Activated B cell treated with CpG ODN at 0.5 μM for 24 hours (primary cell): ENCODE measurements at regions of chr11 and their contacts with region 1.

Region 1: DNA sequence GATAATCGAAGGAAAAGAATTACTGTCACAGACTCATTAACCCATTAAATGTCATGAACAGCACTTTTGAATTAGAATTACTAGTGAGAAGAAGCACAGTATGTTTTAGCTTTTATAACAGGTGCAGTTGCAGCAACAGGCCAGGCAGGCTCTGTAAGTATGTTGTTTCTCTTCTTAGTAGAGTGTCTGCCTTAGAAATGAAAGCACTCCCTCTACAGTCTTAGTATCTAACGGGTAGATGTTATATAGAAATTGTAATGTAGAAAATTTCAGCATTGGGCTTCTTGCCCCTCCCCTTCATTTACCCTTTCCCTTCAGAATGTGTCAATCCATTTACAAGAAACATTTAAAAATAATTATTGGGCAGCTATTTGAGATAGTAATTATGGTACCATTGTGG is 87.4 kb downstream of the HIPK3 start:
- DNase-seq: no peak
- ATAC-seq: no peak
- H3K4me3 Mint-ChIP-seq: no peak overlapping the region
- H3K27ac Mint-ChIP-seq: peak overlapping the region; percentile 18
- H3K4me1 Mint-ChIP-seq: peaks cover 24% of the 10 kb centered on the region
- H3K27me3 Mint-ChIP-seq: no peaks in the 10 kb centered on the region
- CTCF ChIP-seq: no peak

Region 2: DNA sequence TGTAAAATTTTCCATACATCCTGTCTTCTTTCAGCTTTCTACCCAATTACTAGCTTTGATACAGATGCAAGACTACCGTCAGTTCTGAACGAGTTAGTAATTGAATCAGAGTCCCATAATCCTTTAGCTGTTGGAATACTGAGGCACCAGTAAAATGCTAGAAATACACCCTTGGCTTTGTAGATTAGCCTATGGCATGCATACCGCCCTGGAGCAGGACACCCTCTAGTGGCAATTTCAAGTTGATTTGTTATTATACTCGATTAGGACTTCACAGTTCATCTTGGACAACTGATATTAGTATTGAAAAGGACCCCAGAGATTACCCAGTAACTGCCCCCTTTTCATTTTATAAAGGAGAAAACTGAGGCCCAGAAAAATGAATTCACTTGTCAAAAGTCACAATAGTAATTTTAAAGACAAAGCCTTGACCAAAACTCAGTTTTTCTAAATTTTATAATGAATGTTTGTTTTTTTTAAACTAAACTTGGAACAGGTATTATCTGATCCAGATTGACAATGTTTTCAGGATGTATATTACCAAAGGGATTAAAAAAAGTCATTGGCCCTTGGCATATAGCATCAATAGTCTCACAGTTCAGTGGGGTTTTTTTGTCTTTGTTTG is 14.8 kb before region 1 on chr11:
- CTCF ChIA-PET with region 1: no interaction called
- POLR2A ChIA-PET with region 1: no interaction called
- intact Hi-C with region 1: loop called (anchors 2 kb)
- DNase-seq: no peak
- ATAC-seq: peak; percentile 65
- H3K4me3 Mint-ChIP-seq: no peak overlapping the region
- H3K27ac Mint-ChIP-seq: no peak overlapping the region
- H3K4me1 Mint-ChIP-seq: peaks cover 14% of the 10 kb centered on the region
- H3K27me3 Mint-ChIP-seq: no peaks in the 10 kb centered on the region
- CTCF ChIP-seq: no peak

Region 3: GRCh38 chr11:33375236-33375635 is 30.6 kb after region 1 on chr11:
- CTCF ChIA-PET with region 1: no interaction called
- POLR2A ChIA-PET with region 1: no interaction called
- intact Hi-C with region 1: no loop called
- DNase-seq: no peak
- ATAC-seq: no peak
- H3K4me3 Mint-ChIP-seq: peak overlapping the region; percentile 50
- H3K27ac Mint-ChIP-seq: no peak overlapping the region
- H3K4me1 Mint-ChIP-seq: peaks cover 6% of the 10 kb centered on the region
- H3K27me3 Mint-ChIP-seq: peaks cover 53% of the 10 kb centered on the region
- CTCF ChIP-seq: no peak